ENCODE measurements at regions of chr5 and their contacts with region 1.

Region 1: DNA sequence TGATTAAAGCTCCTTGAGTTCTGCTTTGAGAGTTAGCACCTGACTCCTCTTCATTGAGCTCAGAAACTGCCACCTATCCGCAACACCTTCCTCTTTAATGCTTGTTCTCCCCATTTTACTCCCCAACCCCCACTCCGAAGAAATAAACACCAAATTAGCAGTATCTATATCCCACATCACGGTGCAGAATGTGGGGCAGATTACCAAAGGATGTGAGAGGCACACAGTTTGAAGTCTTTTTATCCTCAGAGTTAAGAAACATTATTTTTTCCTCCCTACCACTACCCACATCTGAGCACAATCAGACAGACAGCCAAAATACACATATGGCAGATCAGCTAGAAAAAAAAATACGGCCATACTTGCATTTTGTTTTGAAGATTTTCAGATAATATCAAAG is 26.1 kb upstream of the IL7R start:
- DNase-seq: no peak
- H3K4me3 Mint-ChIP-seq: peak overlapping the region; percentile 1
- H3K27ac Mint-ChIP-seq: peak overlapping the region; percentile 74
- H3K4me1 Mint-ChIP-seq: peaks cover 85% of the 10 kb centered on the region
- H3K27me3 Mint-ChIP-seq: no peaks in the 10 kb centered on the region

Region 2: DNA sequence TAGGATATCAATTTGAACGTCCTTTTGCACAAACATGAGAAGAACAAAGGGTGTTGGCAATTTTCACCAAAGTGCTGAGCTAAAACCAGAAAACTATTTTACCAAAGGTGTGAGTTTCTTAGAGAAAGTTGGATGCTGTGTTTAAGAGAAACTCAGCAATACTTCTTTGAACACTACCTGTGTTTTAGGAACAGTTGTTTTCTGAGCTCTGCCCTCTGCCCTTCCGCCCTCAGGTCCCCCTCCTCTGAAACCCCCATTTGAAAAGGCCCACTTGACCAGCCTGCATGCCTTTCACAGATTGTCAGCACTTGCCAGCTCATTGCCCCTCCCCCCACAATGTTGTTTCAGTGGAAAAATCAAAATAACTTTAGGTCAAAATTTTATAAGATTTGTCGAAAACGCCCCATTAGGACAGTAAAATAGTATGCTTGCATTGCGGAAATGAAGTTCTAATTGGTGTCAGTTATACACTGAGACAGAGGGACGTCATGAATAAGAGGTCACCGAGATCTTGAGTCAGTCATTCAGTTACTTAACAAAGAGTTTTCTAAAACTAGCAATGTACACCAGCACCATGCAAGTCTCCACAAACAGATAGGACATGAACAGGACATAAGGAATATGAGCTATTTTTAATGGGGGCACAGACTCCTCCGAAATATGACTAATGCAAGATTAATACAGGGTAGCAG is 35.8 kb before region 1 on chr5:
- CTCF ChIA-PET with region 1: no interaction called
- POLR2A ChIA-PET with region 1: interaction called, 13 read pairs
- DNase-seq: no peak
- H3K4me3 Mint-ChIP-seq: no peak overlapping the region
- H3K27ac Mint-ChIP-seq: peak overlapping the region; percentile 91
- H3K4me1 Mint-ChIP-seq: peaks cover 79% of the 10 kb centered on the region
- H3K27me3 Mint-ChIP-seq: no peaks in the 10 kb centered on the region

Region 3: DNA sequence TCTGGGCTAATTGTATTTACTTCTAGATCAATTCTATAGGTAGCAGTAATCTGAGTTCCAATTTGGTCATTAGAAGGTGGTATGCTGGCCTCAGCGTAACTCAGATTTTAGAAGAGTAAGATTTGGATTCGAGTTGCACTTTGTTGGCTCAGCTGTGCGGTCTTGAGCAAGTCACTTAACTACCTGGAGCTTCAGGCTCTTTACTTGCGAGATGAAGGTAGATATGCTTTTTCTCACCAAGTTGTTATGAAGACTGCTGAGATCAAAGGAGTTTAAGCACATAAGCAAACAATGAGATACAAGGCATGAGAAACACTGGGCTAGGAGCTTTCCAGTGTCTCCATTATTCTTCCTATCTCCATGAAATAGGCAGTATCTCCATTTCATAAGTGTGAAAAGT is 604.9 kb after region 1 on chr5:
- CTCF ChIA-PET with region 1: interaction called, 12 read pairs
- POLR2A ChIA-PET with region 1: no interaction called
- DNase-seq: no peak
- H3K4me3 Mint-ChIP-seq: no peak overlapping the region
- H3K27ac Mint-ChIP-seq: no peak overlapping the region
- H3K4me1 Mint-ChIP-seq: no peaks in the 10 kb centered on the region
- H3K27me3 Mint-ChIP-seq: peaks cover 24% of the 10 kb centered on the region

Measured in activated CD4-positive, alpha-beta memory T cell treated with anti-CD3 and anti-CD28 coated beads, Interleukin-2, amount 10 ng/mL, durations not matched to agents 7 days and 5 days (primary cell).